ENCODE measurements at regions of chr2 and their contacts with region 1.

Region 1: DNA sequence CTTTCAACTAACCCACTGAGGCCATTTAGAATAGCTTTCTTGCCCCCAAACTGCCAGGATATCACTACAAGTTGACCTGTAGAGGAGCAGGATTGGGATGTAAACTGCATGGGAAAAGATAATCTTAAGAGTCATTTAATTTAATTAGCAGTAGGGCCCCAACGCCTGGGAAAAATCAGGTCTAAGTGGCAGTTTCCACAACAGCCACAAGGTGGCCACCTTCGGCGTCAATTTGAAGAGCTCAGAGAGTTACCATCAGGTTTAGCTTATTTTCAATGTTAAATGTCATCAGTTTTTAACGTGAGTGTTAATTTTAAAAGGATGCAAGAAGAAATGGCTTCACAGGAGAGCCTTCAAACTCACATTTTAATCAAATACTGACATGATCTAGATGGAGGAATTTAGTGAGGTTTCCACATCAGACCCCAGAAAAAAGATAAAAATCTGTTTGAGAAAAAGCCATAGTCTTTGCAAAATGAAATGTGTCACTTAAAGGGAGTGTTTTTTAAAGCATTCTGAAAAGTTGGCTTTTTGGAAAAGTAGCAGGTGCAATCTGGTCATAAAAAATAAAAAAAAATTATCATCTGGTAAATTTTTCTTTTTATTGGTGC is 77.3 kb upstream of the UPP2 start:
- DNase-seq: peak; percentile 64
- H3K4me3 Mint-ChIP-seq: no peak overlapping the region
- H3K27ac Mint-ChIP-seq: no peak overlapping the region
- H3K4me1 Mint-ChIP-seq: no peaks in the 10 kb centered on the region
- H3K27me3 Mint-ChIP-seq: no peaks in the 10 kb centered on the region
- CTCF ChIP-seq: peak; percentile 73

Region 2: DNA sequence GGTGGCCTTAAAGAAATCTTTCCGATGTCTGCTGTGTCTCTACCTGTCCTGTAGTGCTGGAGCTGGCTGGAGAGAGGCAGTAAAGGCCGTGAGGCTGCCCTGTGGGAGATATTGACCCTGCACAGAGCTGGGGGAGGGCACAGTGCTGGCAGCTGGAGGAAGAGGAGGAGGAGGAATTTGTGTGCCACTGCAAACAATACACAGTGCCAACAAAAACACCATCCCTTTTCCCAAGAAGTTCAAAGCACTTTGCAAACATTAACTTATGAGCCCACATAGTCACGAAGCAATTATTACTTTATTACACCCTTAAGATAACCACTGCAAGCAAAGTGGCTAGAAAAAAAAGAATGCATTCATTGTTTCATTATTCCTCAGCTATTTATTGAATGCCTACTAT is 535.5 kb before region 1 on chr2:
- CTCF ChIA-PET with region 1: no interaction called
- POLR2A ChIA-PET with region 1: no interaction called
- intact Hi-C with region 1: no loop called
- DNase-seq: peak; percentile 28
- H3K4me3 Mint-ChIP-seq: no peak overlapping the region
- H3K27ac Mint-ChIP-seq: peak overlapping the region; percentile 46
- H3K4me1 Mint-ChIP-seq: peaks cover 31% of the 10 kb centered on the region
- H3K27me3 Mint-ChIP-seq: no peaks in the 10 kb centered on the region
- CTCF ChIP-seq: no peak

Region 3: DNA sequence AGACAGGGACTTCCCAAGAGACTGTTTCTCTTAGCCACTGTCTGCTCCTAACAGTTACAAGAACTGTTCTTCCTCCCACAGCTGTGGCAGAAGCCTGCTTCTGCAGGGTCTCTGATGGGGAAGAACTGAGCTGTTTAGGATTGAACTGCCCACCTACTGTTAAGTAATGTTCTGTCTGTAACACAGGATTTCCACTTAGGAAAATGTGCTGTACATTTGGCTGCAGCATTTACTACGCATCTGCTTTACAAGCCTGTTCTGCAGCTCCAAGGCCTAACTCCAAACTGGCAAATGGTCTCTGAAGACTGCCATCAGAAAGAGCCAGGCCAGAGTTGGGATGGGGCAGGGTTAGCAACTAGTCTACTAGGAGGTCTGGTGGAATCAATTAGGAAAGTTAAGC is 10.5 kb before region 1 on chr2:
- CTCF ChIA-PET with region 1: interaction called, 28 read pairs
- POLR2A ChIA-PET with region 1: no interaction called
- intact Hi-C with region 1: no loop called
- DNase-seq: no peak
- H3K4me3 Mint-ChIP-seq: no peak overlapping the region
- H3K27ac Mint-ChIP-seq: no peak overlapping the region
- H3K4me1 Mint-ChIP-seq: peaks cover 6% of the 10 kb centered on the region
- H3K27me3 Mint-ChIP-seq: no peaks in the 10 kb centered on the region
- CTCF ChIP-seq: no peak

Region 4: DNA sequence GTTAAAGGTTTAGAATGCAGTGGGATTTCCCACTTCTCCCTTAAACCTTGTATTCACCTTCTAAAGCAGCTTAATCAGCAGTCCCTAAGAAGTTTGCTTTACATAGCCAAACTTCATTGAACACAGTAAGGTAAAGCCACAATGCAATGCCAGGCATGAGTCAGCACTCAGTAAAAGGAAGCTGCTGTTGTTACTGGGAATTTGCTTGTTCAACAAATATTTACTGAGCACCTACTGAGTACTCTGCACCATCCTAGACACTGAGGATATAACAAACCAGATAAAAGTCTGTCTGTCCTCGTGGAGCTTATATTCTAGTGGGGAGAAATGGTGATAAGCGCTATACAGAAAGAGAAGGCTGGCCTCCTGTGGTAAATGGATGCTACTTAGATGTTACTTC is 595.1 kb after region 1 on chr2:
- CTCF ChIA-PET with region 1: interaction called, 12 read pairs
- POLR2A ChIA-PET with region 1: no interaction called
- intact Hi-C with region 1: no loop called
- DNase-seq: peak; percentile 62
- H3K4me3 Mint-ChIP-seq: no peak overlapping the region
- H3K27ac Mint-ChIP-seq: peak overlapping the region; percentile 57
- H3K4me1 Mint-ChIP-seq: peaks cover 11% of the 10 kb centered on the region
- H3K27me3 Mint-ChIP-seq: no peaks in the 10 kb centered on the region
- CTCF ChIP-seq: no peak

Measured in MCF 10A (cell line).